ENCODE measurements at regions of chr12 and their contacts with region 1.

Region 1: GRCh38 chr12:1939801-1940607 is 21.6 kb upstream of the CACNA2D4 start:
- DNase-seq: peak; percentile 78
- H3K4me3 ChIP-seq: no peak overlapping the region
- H3K27ac ChIP-seq: no peak overlapping the region
- H3K4me1 ChIP-seq: no peaks in the 10 kb centered on the region
- H3K27me3 ChIP-seq: no peaks in the 10 kb centered on the region

Region 2: DNA sequence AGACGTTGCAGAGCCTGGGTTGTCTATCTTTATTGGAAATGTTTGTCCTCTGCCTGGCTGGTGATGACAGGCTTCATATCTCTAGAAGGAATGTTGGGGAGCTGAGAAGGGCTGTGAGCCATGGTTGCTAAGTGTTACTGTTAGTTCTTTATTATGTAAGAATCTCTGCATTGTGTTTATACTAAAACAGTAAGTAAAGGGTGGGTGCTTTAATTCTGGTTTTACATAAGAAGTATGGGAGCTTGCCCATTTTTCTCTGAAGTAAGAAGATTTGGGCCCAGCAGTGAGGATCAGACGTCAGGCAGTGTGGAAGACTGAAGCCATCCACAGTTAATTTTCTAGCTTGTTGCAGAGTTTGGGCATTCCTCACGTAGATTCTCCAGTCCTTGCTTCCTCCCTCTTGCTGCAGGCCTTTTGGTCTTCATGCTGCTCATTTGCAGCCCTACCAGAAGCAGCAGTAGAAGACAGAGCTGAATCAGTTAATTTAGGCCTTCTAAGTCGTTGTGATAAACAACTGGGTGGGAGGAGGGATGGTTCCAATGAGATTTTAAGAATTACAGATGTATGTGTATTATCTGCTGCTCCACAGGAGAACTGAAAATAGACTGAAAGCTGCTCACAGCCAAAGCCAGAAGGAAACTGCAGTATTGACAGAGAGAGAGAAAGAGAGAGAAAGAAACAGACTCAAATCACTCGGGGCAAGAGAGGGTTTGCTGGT is 289.6 kb before region 1 on chr12:
- in situ Hi-C with region 1: loop called (anchors 10 kb)
- DNase-seq: peak; percentile 47
- H3K4me3 ChIP-seq: no peak overlapping the region
- H3K27ac ChIP-seq: peak overlapping the region; percentile 32
- H3K4me1 ChIP-seq: peaks cover 21% of the 10 kb centered on the region
- H3K27me3 ChIP-seq: no peaks in the 10 kb centered on the region

Region 3: GRCh38 chr12:1812650-1813302 is 127.2 kb before region 1 on chr12:
- in situ Hi-C with region 1: loop called (anchors 5 kb)
- DNase-seq: peak; percentile 36
- H3K4me3 ChIP-seq: no peak overlapping the region
- H3K27ac ChIP-seq: no peak overlapping the region
- H3K4me1 ChIP-seq: no peaks in the 10 kb centered on the region
- H3K27me3 ChIP-seq: peaks cover 10% of the 10 kb centered on the region; the same call in 1 of the 2 replicates

Region 4: DNA sequence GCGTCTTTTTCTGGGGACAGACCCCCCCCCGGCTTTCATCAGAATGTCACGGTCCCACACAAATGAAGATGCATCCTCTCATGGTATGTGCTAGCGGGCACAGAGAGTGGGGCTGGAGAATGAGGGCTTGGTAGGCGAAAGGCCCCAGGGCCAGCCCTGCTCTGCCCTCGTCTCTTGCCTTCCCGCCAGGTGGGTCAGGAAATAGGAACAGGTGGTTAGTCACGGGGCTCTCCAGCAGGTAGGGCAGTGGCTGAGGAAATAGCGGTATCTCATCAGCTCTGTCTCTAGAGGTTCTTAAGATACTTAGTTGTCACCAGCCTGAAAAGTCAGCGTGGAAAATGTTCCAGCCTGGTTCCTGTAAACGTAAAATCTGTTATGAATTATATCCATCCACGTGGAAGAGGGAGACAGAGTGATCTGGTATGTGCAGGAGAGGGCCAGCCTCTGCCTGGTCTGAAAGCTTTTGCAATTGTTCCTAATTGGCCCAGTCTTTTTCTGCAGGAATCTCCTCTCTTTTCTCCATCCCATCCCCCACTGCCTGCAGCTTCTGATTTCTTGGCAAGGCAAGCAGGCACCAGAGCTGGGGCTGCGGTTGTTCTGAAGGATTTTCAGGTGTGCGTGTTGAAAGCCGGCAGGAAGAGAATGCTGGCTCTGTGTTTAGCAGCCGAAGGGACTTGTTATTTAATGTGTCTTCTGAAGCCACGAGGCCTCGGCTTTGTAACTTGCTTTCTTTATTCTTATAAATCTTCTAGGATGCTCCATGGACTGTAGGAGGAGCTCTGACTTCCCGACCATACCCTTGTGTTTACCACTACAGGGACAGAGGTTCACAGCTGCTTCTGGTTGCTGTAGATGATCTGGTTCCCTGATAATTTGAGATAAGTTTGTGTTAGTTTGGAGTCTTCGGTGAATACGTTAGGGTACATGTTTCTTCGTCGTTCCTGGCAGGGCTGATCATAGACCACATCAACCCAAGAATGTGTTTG is 243.8 kb after region 1 on chr12:
- in situ Hi-C with region 1: no loop called
- DNase-seq: peak; percentile 77
- H3K4me3 ChIP-seq: peak overlapping the region; percentile 46
- H3K27ac ChIP-seq: peak overlapping the region; percentile 55
- H3K4me1 ChIP-seq: peaks cover 40% of the 10 kb centered on the region
- H3K27me3 ChIP-seq: no peaks in the 10 kb centered on the region

Region 5: DNA sequence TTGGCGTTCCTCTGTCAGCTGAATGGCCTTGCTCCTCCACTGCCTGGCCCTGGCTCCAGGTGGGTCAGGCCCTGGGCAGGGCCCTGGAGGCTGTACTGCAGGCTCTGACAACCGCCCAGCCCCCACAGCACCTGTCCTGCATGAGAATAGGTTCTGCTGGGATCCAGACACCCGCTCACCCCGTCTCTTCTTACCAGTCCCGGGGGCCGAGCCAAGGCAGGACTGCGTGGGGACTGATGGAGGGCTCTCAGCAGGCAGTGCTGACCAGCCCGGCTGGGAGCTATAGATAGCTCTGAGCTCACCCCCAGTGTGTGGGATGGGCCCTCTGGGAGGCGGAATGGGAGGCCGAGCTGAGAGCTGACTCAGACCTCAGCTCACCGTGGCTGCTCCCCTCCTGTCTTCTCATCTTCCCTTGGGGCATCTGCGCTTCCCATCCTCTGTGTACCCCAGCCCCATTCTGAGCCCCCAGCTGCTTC is 1058.8 kb after region 1 on chr12:
- in situ Hi-C with region 1: no loop called
- DNase-seq: peak; percentile 96
- H3K4me3 ChIP-seq: no peak overlapping the region
- H3K27ac ChIP-seq: peak overlapping the region; percentile 55
- H3K4me1 ChIP-seq: peaks cover 14% of the 10 kb centered on the region
- H3K27me3 ChIP-seq: no peaks in the 10 kb centered on the region

Measured in GM23248 (cell line).